GM12878 (cell line): ENCODE measurements at regions of chr14 and their contacts with region 1.

Region 1: DNA sequence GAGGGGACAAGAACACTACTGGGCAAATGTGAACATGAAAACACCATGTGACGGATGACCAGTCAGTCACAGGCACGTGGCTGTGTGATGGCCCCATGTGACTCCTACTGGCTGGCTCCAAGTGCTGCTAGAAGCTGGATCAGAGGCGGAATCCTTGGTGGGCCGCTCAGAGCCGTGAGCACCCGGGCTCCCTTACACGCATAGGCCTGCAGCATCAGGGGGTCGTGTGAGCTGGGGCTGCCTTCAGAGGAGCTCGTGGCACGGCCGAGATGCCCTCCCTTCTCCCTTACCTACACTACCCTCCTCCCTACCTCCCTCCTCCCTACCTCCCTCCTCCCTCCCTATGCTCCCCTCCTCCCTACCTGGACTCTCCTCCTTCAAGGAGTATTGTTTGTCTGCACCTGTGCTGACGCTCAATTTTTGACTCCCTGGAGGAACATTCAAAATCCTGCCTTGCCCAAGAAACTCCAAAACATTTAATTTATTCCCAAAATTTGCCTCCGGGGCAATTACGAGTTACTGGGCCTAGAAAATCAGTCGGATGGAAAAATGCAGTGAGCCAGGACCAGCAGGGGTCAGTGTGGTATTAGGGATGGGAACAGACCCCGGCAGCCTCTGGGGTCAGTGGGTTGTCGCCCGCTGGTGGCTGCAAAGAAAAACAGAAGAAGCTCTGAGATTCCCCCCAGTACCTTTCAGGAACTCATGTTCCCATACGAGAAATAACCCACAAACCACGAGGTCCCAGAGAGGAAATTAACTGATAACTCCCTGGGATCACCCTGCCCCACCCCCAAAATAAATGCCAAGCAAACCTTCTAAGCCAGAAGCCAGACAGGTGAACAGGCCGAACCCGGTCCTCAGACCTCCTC is 61.2 kb downstream of the C14orf132 start:
- DNase-seq: peak; percentile 15
- ATAC-seq: peak; percentile 73
- H3K4me3 ChIP-seq: no peak overlapping the region
- H3K27ac ChIP-seq: no peak overlapping the region
- H3K4me1 ChIP-seq: no peaks in the 10 kb centered on the region
- H3K27me3 ChIP-seq: no peaks in the 10 kb centered on the region
- CTCF ChIP-seq: peak; percentile 72 to 94 (median 79)
- EP300 ChIP-seq: no peak
- POLR2A ChIP-seq: no peak
- RAD21 ChIP-seq: peak; percentile 87

Region 2: DNA sequence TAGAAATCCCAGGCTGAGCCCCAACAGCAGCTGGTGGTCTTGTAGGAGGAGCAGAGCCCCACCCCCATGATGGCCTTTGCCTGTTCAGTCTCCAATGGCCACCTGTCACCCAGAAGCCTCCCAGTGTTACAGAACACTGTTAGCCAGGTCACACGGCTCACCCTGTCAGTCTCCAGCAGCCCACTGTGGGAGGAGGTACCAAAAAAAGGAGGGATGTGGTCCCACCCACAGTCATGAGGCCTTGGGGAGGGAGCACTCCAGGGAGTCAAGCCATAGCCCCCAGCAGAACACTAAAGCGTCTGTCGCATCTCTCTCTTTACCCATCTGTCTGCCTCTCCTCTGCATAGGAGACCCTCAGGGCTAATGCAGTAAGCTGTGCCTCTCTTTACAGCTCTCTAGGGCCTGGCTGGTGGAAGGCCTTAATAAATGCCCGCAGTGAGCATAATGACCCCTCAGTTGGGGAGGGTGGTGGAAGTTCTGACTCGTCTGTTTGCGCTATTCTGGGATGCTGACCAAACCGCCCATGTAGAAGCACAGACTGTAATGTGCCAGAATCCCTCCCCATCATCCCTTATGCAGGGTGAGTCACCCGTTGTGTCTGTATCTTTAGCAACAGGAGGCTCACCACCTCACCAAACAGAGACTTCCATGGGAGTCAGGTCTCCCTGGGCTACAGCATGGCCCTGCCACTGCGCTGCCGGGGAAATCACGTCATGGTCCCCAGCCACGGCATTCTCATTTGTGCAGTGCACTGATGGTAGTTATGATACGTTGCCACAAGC is 46.6 kb before region 1 on chr14:
- CTCF ChIA-PET with region 1: interaction called, 82 read pairs
- POLR2A ChIA-PET with region 1: interaction called, 3 read pairs
- RAD21 ChIA-PET with region 1: interaction called, 41 read pairs
- SMC1A ChIA-PET with region 1: interaction called, 42 read pairs
- in situ Hi-C with region 1: no loop called
- intact Hi-C with region 1: loop called (anchors 1 kb)
- DNase-seq: no peak
- ATAC-seq: no peak
- H3K4me3 ChIP-seq: no peak overlapping the region
- H3K27ac ChIP-seq: no peak overlapping the region
- H3K4me1 ChIP-seq: no peaks in the 10 kb centered on the region
- H3K27me3 ChIP-seq: peaks cover 0 to 4% of the 10 kb centered on the region in 2 experiments; a peak in 3 of 4 replicates
- CTCF ChIP-seq: no peak
- EP300 ChIP-seq: no peak
- POLR2A ChIP-seq: no peak
- RAD21 ChIP-seq: no peak

Region 3: GRCh38 chr14:96077983-96078658 is 22.3 kb before region 1 on chr14:
- CTCF ChIA-PET with region 1: interaction called, 12 read pairs
- POLR2A ChIA-PET with region 1: no interaction called
- RAD21 ChIA-PET with region 1: interaction called, 9 read pairs
- SMC1A ChIA-PET with region 1: interaction called, 5 read pairs
- in situ Hi-C with region 1: no loop called
- intact Hi-C with region 1: no loop called
- DNase-seq: peak; percentile 31
- ATAC-seq: peak; percentile 79
- H3K4me3 ChIP-seq: no peak overlapping the region
- H3K27ac ChIP-seq: peak overlapping the region; percentile 44
- H3K4me1 ChIP-seq: peaks cover 7% of the 10 kb centered on the region
- H3K27me3 ChIP-seq: peaks cover 0 to 6% of the 10 kb centered on the region in 2 experiments; a peak in 1 of 4 replicates
- CTCF ChIP-seq: no peak
- EP300 ChIP-seq: no peak; a peak in 1 of 4 replicates
- POLR2A ChIP-seq: no peak
- RAD21 ChIP-seq: no peak

Region 4: DNA sequence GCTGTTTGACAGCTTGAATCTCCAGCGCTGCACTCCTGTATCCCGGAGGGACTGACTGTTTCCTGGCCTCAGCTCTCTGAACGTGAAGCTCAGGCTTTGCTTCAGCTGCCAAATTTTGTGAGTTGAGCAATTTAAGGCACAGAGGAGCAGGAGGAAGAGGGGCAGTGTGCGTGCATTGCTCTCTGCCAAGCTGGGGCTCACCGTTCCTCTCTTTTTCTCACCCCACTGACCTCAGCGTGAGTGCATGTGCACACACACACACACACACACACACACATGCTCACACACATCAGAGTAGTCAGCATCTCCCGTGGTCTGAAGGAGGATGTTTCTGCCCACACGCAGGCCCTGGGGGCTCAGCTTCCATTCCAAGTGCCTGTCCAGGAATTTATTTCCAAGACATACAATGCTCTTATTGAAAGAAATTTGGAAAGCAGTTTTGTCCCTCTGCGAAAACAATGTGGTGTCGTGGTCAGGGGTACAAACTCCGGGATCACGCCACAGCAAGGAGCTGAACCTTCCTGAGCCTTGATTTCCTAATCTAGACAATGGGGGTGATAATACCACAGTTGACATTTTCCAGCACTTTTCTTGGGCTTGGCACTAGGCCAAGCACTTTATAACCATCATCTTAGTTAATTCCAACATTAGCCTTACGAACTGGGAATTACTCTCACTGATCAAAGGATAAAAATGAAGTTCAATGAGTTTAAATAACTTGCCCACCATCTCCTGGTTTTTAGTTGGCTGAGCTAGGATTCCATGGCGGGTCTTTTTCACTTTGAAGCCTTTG is 76.6 kb after region 1 on chr14:
- CTCF ChIA-PET with region 1: no interaction called
- POLR2A ChIA-PET with region 1: no interaction called
- RAD21 ChIA-PET with region 1: no interaction called
- SMC1A ChIA-PET with region 1: no interaction called
- in situ Hi-C with region 1: no loop called
- intact Hi-C with region 1: no loop called
- DNase-seq: no peak
- ATAC-seq: no peak
- H3K4me3 ChIP-seq: no peak overlapping the region
- H3K27ac ChIP-seq: no peak overlapping the region
- H3K4me1 ChIP-seq: no peaks in the 10 kb centered on the region
- H3K27me3 ChIP-seq: no peaks in the 10 kb centered on the region
- CTCF ChIP-seq: no peak
- EP300 ChIP-seq: no peak
- POLR2A ChIP-seq: no peak
- RAD21 ChIP-seq: no peak

Region 5: DNA sequence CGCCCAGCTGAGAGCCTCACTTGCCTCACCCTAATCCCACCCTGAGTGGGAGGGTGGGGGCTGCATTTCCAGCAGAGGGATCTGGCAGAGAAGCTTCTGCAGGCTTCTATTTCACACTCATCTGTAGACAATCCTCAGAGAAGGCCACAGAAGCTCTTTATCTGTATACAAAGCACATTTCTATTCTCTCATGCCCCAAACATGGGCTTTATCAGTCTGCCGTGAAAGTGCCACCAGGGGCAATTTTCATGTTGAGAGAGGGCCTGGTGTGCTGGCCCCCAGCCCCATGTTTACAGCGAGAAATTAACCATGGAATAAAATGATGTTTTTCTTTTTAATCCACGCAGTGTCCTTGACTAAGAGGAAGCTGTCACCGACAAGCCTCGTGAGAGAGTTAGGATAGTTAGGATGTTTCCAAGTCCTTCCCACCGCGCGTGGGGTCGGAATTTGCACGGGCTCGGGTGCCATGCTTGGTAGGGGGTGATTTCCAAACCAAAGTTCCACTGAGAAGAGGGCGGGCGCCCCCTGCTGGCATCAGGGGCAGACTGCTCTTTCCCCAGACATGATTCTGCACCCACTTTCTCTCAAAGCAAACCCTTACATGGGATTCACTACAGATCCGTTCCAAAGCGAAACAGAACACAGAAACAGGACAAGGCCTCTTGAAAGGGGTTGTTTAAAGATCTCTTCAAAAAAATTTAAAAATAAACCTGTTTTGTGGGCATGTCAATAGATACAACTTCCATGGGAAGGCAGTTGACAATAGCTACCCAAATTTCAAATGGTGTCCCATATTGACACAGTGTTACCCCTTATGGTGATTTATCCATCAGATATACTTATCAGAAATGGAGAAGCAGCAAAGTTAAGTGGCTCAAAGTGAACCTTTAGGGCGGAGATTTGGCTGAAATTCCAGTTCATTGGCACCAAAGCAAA is 175.1 kb after region 1 on chr14:
- CTCF ChIA-PET with region 1: interaction called, 71 read pairs
- POLR2A ChIA-PET with region 1: no interaction called
- RAD21 ChIA-PET with region 1: interaction called, 14 read pairs
- SMC1A ChIA-PET with region 1: interaction called, 29 read pairs
- in situ Hi-C with region 1: loop called (anchors 5 kb)
- intact Hi-C with region 1: loop called (anchors 1 kb)
- DNase-seq: peak; percentile 7
- ATAC-seq: peak; percentile 86
- H3K4me3 ChIP-seq: no peak overlapping the region
- H3K27ac ChIP-seq: no peak overlapping the region
- H3K4me1 ChIP-seq: no peaks in the 10 kb centered on the region
- H3K27me3 ChIP-seq: no peaks in the 10 kb centered on the region
- CTCF ChIP-seq: peak; percentile 87 to 95 (median 89)
- EP300 ChIP-seq: no peak
- POLR2A ChIP-seq: no peak
- RAD21 ChIP-seq: peak; percentile 81

Region 6: DNA sequence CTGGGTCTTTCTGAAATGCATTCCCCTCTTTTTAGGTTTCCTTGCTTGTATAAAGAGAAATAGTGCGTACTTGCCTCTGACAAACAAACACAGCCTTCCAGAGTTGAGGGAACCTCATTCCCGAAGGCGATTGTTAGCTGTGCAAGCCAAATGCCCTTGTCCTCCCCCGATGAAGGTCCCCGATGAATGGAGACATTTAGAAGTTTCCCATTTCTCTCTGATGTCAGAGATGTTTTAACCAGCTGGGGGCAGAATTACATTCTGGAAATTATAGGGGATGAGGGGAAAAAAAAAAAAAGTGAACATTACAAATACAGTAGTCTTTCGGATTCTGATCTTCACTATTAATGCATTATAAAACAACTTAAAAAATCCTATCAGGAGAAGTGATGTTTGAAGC is 1063.6 kb after region 1 on chr14:
- CTCF ChIA-PET with region 1: no interaction called
- POLR2A ChIA-PET with region 1: no interaction called
- RAD21 ChIA-PET with region 1: no interaction called
- SMC1A ChIA-PET with region 1: no interaction called
- in situ Hi-C with region 1: no loop called
- intact Hi-C with region 1: no loop called
- DNase-seq: no peak
- ATAC-seq: no peak
- H3K4me3 ChIP-seq: no peak overlapping the region
- H3K27ac ChIP-seq: no peak overlapping the region
- H3K4me1 ChIP-seq: no peaks in the 10 kb centered on the region
- H3K27me3 ChIP-seq: no peaks in the 10 kb centered on the region
- CTCF ChIP-seq: no peak
- EP300 ChIP-seq: no peak
- POLR2A ChIP-seq: no peak
- RAD21 ChIP-seq: no peak